ENCODE measurements at regions of chr6 and their contacts with region 1.

Region 1: GRCh38 chr6:158869826-158870648 is 50.9 kb upstream of the EZR start:
- DNase-seq: peak in 5 of 9 experiments; percentile 63 to 99 (median 94)
- ATAC-seq: peak; percentile 75
- H3K4me3 ChIP-seq: peak overlapping the region; percentile 57 to 61
- H3K4me3 Mint-ChIP-seq: peak overlapping the region; percentile 89
- H3K27ac ChIP-seq: peak overlapping the region; percentile 86 to 98
- H3K27ac Mint-ChIP-seq: peak overlapping the region; percentile 99
- H3K4me1 ChIP-seq: peaks cover 20% of the 10 kb centered on the region
- H3K4me1 Mint-ChIP-seq: peaks cover 34% of the 10 kb centered on the region
- H3K27me3 ChIP-seq: no peaks in the 10 kb centered on the region
- H3K27me3 Mint-ChIP-seq: no peaks in the 10 kb centered on the region
- CTCF ChIP-seq: no peak

Region 2: GRCh38 chr6:157632821-157633220 is 1237.2 kb before region 1 on chr6:
- CTCF ChIA-PET with region 1: no interaction called
- POLR2A ChIA-PET with region 1: no interaction called
- intact Hi-C with region 1: no loop called
- DNase-seq: no peak
- ATAC-seq: no peak
- H3K4me3 ChIP-seq: no peak overlapping the region
- H3K4me3 Mint-ChIP-seq: no peak overlapping the region
- H3K27ac ChIP-seq: no peak overlapping the region
- H3K27ac Mint-ChIP-seq: no peak overlapping the region
- H3K4me1 ChIP-seq: peaks cover 7% of the 10 kb centered on the region
- H3K4me1 Mint-ChIP-seq: peaks cover 12% of the 10 kb centered on the region
- H3K27me3 ChIP-seq: no peaks in the 10 kb centered on the region
- H3K27me3 Mint-ChIP-seq: peaks cover 2% of the 10 kb centered on the region
- CTCF ChIP-seq: no peak

Region 3: DNA sequence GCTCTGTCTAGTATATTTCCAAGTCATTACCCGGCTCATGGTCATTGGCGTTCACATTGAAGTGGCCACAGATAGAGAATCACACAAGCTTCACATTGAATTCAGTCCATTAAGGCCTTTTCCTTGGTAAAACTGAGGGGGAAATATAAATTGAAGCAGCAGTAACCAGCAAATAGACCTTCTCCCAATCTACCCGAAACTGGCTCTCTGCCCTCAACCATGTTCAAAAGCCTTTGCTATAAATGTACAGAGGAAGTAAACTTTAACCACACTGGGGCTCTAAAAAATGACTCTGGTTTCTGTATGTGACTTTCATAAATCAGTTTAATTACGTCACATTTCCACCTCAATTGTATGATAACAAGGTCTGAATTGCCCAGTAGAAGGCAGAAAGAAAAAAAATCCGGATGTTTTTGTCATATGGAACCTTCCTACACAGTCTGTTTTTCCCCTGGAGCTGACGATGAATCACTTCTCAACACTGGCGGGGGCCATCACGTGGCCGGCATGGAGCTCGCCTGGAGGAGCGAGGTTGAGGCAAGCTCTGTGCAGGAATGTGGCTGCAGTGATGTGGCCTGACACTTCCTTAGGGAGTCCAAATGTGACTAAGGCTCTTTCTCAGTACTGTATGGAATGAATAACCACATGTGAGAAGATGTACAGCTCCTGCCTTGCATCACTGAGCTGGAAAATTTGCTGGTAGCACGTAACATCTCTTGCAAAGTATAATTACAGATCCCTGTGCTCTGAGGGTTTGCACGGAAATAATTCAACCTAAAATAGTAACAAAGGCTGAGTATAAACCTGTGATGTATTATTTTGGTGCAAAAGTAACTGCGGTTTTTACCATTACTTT is 1105.6 kb before region 1 on chr6:
- CTCF ChIA-PET with region 1: no interaction called
- POLR2A ChIA-PET with region 1: no interaction called
- intact Hi-C with region 1: loop called in 1 of 2 experiments (anchors 5 kb)
- DNase-seq: peak; percentile 57 to 93 (median 80)
- ATAC-seq: peak; percentile 51
- H3K4me3 ChIP-seq: peak overlapping the region; percentile 10 to 23
- H3K4me3 Mint-ChIP-seq: peak overlapping the region; percentile 74
- H3K27ac ChIP-seq: peak overlapping the region; percentile 27 to 61
- H3K27ac Mint-ChIP-seq: peak overlapping the region; percentile 95
- H3K4me1 ChIP-seq: peaks cover 69% of the 10 kb centered on the region
- H3K4me1 Mint-ChIP-seq: peaks cover 73% of the 10 kb centered on the region
- H3K27me3 ChIP-seq: no peaks in the 10 kb centered on the region
- H3K27me3 Mint-ChIP-seq: no peaks in the 10 kb centered on the region
- CTCF ChIP-seq: no peak

Region 4: DNA sequence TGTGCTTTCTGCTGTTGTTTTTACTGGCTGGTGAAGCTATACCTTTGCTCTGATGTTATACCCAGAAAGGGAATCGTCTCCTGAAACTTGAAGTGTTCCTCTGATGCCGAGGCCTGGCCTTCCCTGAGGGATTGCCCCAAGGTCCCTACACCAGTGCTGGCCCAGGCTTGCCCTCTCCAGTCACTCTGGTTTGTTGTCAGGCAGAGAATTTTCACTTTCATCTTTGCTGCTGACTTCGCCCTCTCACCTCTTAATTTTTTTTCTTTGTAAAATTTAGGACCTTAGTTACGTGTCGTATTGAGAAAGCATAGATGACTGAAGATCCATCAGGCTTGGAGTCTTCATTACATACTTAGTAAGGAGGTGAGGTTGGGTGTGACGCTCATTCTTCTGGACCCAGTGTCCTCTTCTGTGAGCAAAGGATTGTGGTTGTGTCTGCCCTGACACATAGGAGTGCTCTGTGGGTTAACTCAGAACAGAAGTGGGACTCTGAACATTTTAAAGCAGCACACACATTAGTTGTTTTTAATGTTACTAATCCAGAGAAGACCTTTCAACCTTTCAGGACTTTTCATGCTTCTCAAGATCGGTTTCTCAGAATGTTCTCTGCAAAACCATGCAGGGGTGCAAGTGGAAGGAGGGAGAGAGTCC is 512.3 kb before region 1 on chr6:
- CTCF ChIA-PET with region 1: no interaction called
- POLR2A ChIA-PET with region 1: no interaction called
- intact Hi-C with region 1: no loop called
- DNase-seq: no peak
- ATAC-seq: no peak
- H3K4me3 ChIP-seq: no peak overlapping the region
- H3K4me3 Mint-ChIP-seq: peak overlapping the region; percentile 11
- H3K27ac ChIP-seq: no peak overlapping the region
- H3K27ac Mint-ChIP-seq: peak overlapping the region; percentile 42
- H3K4me1 ChIP-seq: peaks cover 16% of the 10 kb centered on the region
- H3K4me1 Mint-ChIP-seq: peaks cover 57% of the 10 kb centered on the region
- H3K27me3 ChIP-seq: no peaks in the 10 kb centered on the region
- H3K27me3 Mint-ChIP-seq: no peaks in the 10 kb centered on the region
- CTCF ChIP-seq: no peak

Region 5: DNA sequence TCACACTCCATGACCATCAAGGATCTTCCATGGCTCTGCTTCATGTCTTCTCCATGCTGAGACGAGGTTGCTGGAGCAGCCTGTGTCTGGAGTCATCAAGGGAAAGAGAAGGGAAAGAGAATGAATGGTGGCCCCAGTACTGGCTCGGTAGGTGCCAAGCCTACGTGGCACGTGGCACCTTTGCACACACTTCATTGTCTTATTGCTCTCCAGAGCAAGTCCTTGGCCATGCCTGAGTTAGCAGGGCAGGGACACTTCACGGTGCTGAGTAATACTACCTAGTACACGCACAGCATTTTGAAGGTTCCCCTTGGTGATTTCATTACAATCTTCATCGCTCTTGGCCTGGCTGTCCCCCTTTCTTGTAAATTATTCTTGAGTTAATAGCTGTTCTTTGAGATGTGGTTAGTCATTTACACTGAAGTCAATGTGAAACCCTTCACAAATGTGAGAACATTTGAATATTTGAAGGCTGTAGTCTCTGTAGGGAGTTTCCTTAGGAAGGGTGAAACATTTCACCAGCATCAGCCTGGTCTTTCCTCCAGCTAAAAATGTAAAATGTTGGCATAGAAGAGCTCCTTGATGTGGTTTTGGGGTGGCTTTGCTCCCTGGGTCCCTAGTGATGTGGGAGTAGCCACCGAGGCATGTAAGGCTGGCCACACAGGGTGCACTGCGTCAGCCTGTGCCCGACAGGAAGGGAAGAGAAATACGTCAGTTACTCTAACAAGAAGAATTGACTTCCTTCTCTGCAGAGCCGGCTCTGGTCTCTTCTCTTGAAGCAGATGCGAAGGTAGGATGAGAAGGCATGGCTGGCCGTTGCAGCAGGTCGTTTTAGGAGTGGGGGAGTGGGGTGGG is 220.5 kb before region 1 on chr6 and contains the start of gene SYTL3:
- CTCF ChIA-PET with region 1: no interaction called
- POLR2A ChIA-PET with region 1: interaction called, 6 read pairs
- intact Hi-C with region 1: loop called (anchors 2 to 5 kb)
- DNase-seq: peak; percentile 50 to 97 (median 76)
- ATAC-seq: peak; percentile 61
- H3K4me3 ChIP-seq: peak within 1 kb of the TSS in 1 of 2 experiments; percentile 43
- H3K4me3 Mint-ChIP-seq: peak within 1 kb of the TSS; percentile 77
- H3K27ac ChIP-seq: peak within 1 kb of the TSS; percentile 53 to 76
- H3K27ac Mint-ChIP-seq: peak within 1 kb of the TSS; percentile 85
- H3K4me1 ChIP-seq: peaks cover 51% of the 10 kb centered on the region
- H3K4me1 Mint-ChIP-seq: peaks cover 64% of the 10 kb centered on the region
- H3K27me3 ChIP-seq: no peaks in the 10 kb centered on the region
- H3K27me3 Mint-ChIP-seq: no peaks in the 10 kb centered on the region
- CTCF ChIP-seq: no peak
- total RNA-seq, gene SYTL3: 38.2 to 44.6 TPM

Region 6: GRCh38 chr6:158803733-158804143 is 66.3 kb before region 1 on chr6:
- CTCF ChIA-PET with region 1: interaction called, 5 read pairs
- POLR2A ChIA-PET with region 1: interaction called, 17 read pairs
- intact Hi-C with region 1: no loop called
- DNase-seq: peak in 7 of 9 experiments; percentile 33 to 79 (median 60)
- ATAC-seq: peak; percentile 48
- H3K4me3 ChIP-seq: peak overlapping the region; percentile 28 to 40
- H3K4me3 Mint-ChIP-seq: peak overlapping the region; percentile 73
- H3K27ac ChIP-seq: peak overlapping the region; percentile 25 to 79
- H3K27ac Mint-ChIP-seq: peak overlapping the region; percentile 86
- H3K4me1 ChIP-seq: peaks cover 90% of the 10 kb centered on the region
- H3K4me1 Mint-ChIP-seq: peaks cover 91% of the 10 kb centered on the region
- H3K27me3 ChIP-seq: no peaks in the 10 kb centered on the region
- H3K27me3 Mint-ChIP-seq: no peaks in the 10 kb centered on the region
- CTCF ChIP-seq: no peak

Region 7: DNA sequence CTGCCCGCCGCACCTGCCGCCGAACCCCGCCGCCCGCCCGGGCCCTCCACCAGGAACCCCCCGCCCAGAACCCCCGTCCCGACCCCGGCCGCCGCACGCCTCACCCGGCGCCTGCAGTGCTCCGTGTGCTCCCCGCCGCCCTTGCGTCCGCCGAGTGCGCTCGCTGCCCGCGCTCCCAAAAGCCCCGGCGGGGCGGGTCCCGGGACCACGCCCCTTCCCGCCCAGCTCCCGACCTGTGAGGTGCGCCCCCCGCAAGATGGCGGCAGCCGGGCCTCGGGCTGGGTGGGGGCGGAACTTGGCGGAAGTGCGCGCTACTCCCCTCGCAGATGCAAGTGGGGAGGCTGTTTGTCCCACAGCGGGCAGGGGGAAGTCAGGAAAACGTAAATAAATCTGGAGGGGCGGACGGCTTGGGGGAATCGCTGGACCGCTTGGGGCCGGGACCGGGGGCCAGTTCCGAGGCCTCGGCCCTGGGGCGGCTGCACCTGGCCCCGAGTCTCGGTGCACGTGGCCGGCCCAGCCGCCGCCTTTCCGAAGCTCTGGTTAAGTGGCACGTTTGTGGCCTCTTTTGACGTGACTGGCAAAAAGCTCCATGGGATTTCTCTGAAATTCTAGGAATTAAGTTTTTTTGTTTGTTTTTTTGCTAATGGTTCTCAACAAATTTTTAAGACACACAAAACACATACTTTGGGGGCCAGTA is 50.7 kb before region 1 on chr6 and contains the start of gene EZR:
- CTCF ChIA-PET with region 1: interaction called, 10 read pairs
- POLR2A ChIA-PET with region 1: interaction called, 48 read pairs
- intact Hi-C with region 1: loop called (anchors 1 kb)
- DNase-seq: peak; percentile 75 to 95 (median 88)
- ATAC-seq: peak; percentile 63
- H3K4me3 ChIP-seq: peak within 1 kb of the TSS; percentile 49 to 83
- H3K4me3 Mint-ChIP-seq: peak within 1 kb of the TSS; percentile 98
- H3K27ac ChIP-seq: peak within 1 kb of the TSS; percentile 89 to 91
- H3K27ac Mint-ChIP-seq: peak within 1 kb of the TSS; percentile 97
- H3K4me1 ChIP-seq: peaks cover 27% of the 10 kb centered on the region
- H3K4me1 Mint-ChIP-seq: peaks cover 43% of the 10 kb centered on the region
- H3K27me3 ChIP-seq: no peaks in the 10 kb centered on the region
- H3K27me3 Mint-ChIP-seq: no peaks in the 10 kb centered on the region
- CTCF ChIP-seq: no peak
- total RNA-seq, gene EZR: 626 to 627 TPM

Region 8: GRCh38 chr6:158910484-158911348 is 40.7 kb after region 1 on chr6:
- CTCF ChIA-PET with region 1: no interaction called
- POLR2A ChIA-PET with region 1: interaction called, 10 read pairs
- intact Hi-C with region 1: loop called (anchors 5 kb)
- DNase-seq: peak in 3 of 9 experiments; percentile 22 to 54 (median 25)
- ATAC-seq: peak; percentile 58
- H3K4me3 ChIP-seq: peak overlapping the region; percentile 23 to 33
- H3K4me3 Mint-ChIP-seq: peak overlapping the region; percentile 72
- H3K27ac ChIP-seq: peak overlapping the region in 1 of 2 experiments; percentile 17
- H3K27ac Mint-ChIP-seq: peak overlapping the region; percentile 80
- H3K4me1 ChIP-seq: peaks cover 31% of the 10 kb centered on the region
- H3K4me1 Mint-ChIP-seq: peaks cover 45% of the 10 kb centered on the region
- H3K27me3 ChIP-seq: no peaks in the 10 kb centered on the region
- H3K27me3 Mint-ChIP-seq: no peaks in the 10 kb centered on the region
- CTCF ChIP-seq: no peak

Measured in CD8-positive, alpha-beta T cell (primary cell).